PC-9 (cell line): ENCODE measurements at regions of chr6 and their contacts with region 1.

Region 1: GRCh38 chr6:122869437-122870024 is 80.5 kb downstream of the SMPDL3A start:
- DNase-seq: peak; percentile 14 to 59
- H3K4me3 ChIP-seq: no peak overlapping the region
- H3K27ac ChIP-seq: no peak overlapping the region
- H3K4me1 ChIP-seq: no peaks in the 10 kb centered on the region
- H3K27me3 ChIP-seq: no peaks in the 10 kb centered on the region
- CTCF ChIP-seq: peak; percentile 94

Region 2: GRCh38 chr6:123316733-123317323 is 447.3 kb after region 1 on chr6:
- CTCF ChIA-PET with region 1: no interaction called
- POLR2A ChIA-PET with region 1: no interaction called
- intact Hi-C with region 1: loop called (anchors 1 kb)
- DNase-seq: no peak
- H3K4me3 ChIP-seq: no peak overlapping the region
- H3K27ac ChIP-seq: no peak overlapping the region
- H3K4me1 ChIP-seq: no peaks in the 10 kb centered on the region
- H3K27me3 ChIP-seq: no peaks in the 10 kb centered on the region
- CTCF ChIP-seq: peak; percentile 89

Region 3: GRCh38 chr6:123380257-123380656 is 510.7 kb after region 1 on chr6:
- CTCF ChIA-PET with region 1: interaction called, 8 read pairs
- POLR2A ChIA-PET with region 1: no interaction called
- intact Hi-C with region 1: loop called (anchors 5 kb)
- DNase-seq: no peak
- H3K4me3 ChIP-seq: no peak overlapping the region
- H3K27ac ChIP-seq: no peak overlapping the region
- H3K4me1 ChIP-seq: no peaks in the 10 kb centered on the region
- H3K27me3 ChIP-seq: no peaks in the 10 kb centered on the region
- CTCF ChIP-seq: peak; percentile 61

Region 4: DNA sequence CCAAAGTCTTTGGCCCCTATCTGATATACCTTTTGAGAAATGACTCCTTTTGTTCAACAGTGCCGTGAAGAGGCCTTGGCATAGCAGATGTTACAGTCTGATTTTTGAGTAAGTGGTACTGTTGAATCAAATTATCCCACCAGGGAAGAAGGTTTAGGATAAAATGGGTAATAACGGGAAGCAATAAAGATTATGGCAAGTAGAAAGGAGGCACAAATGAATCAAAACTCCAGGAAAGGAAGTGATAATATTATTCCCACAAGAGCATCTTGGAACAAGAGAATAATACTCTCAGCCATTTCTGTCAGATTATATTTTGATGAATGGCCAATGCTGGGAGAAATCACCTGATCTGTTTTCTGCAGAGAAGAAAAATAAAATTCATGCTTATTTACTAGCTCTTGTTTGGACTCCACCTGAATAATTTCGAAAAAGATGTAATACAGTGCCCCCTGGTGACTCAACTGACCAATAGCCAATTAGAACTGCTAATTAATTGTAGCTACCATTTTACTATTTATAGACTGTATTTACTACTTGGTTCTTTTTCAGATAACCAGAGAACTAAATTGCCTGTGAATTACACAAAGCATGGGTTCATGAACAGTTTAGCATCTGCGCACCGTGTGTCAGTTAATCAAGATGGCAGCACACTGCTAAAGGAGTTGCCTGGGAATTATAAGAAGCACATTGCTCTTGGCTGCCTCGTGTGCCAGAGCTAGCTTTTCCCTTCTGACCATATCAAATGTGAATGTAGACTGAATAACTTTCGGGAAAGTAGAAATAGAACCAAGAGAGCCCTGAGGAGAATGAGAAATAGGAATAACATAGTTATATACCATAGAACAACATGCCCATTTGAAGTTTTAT is 845.7 kb after region 1 on chr6:
- CTCF ChIA-PET with region 1: interaction called, 10 read pairs
- POLR2A ChIA-PET with region 1: no interaction called
- intact Hi-C with region 1: loop called (anchors 10 kb)
- DNase-seq: peak; percentile 9 to 38
- H3K4me3 ChIP-seq: no peak overlapping the region
- H3K27ac ChIP-seq: no peak overlapping the region
- H3K4me1 ChIP-seq: no peaks in the 10 kb centered on the region
- H3K27me3 ChIP-seq: no peaks in the 10 kb centered on the region
- CTCF ChIP-seq: peak; percentile 84

Region 5: DNA sequence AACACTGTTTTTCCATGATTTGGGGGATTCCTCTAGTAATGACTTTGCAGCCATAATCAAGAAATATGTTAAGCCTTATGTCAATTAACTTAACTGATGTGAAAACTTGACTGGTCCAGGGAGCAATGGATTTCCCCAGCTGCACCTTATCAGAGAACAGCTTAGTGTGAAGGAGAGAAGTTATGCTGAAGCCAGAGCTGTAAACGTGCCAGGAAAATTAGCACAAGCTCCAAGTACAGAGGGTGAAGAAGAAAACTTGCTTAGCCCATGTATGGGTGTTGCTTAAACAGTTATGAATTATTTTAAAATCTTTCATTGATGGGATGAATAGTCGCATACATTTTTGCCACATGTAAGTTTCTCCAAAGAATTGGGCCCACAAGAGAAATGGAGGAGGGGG is 1877.8 kb after region 1 on chr6:
- CTCF ChIA-PET with region 1: no interaction called
- POLR2A ChIA-PET with region 1: interaction called, 10 read pairs
- intact Hi-C with region 1: no loop called
- DNase-seq: no peak
- H3K4me3 ChIP-seq: no peak overlapping the region
- H3K27ac ChIP-seq: no peak overlapping the region
- H3K4me1 ChIP-seq: no peaks in the 10 kb centered on the region
- H3K27me3 ChIP-seq: no peaks in the 10 kb centered on the region
- CTCF ChIP-seq: no peak